ENCODE measurements at regions of chrX and their contacts with region 1.

Region 1: GRCh38 chrX:130120746-130121504 is 10.6 kb upstream of the ELF4 start:
- DNase-seq: no peak
- ATAC-seq: peak; percentile 89
- H3K4me3 ChIP-seq: peak overlapping the region; percentile 53; the same call in 1 of the 2 replicates
- H3K27ac ChIP-seq: peak overlapping the region; percentile 65
- H3K4me1 ChIP-seq: peaks cover 30% of the 10 kb centered on the region
- H3K27me3 ChIP-seq: no peaks in the 10 kb centered on the region
- CTCF ChIP-seq: peak; percentile 48 to 56 (median 53); a peak in 4 of 6 replicates
- EP300 ChIP-seq: no peak
- POLR2A ChIP-seq: peak; percentile 45; the same call in 1 of the 2 replicates
- RAD21 ChIP-seq: peak; percentile 64

Region 2: GRCh38 chrX:130060122-130061069 is 60.5 kb before region 1 on chrX:
- CTCF ChIA-PET with region 1: interaction called, 10 read pairs
- POLR2A ChIA-PET with region 1: no interaction called
- RAD21 ChIA-PET with region 1: interaction called, 6 read pairs
- SMC1A ChIA-PET with region 1: interaction called, 5 read pairs
- in situ Hi-C with region 1: no loop called
- intact Hi-C with region 1: no loop called
- DNase-seq: no peak
- ATAC-seq: peak; percentile 98
- H3K4me3 ChIP-seq: peak overlapping the region; percentile 36; the same call in 1 of the 2 replicates
- H3K27ac ChIP-seq: no peak overlapping the region
- H3K4me1 ChIP-seq: peaks cover 3% of the 10 kb centered on the region; the same call in 1 of the 2 replicates
- H3K27me3 ChIP-seq: no peaks in the 10 kb centered on the region
- CTCF ChIP-seq: peak; percentile 66 to 90 (median 76)
- EP300 ChIP-seq: no peak
- POLR2A ChIP-seq: peak; percentile 66
- RAD21 ChIP-seq: peak; percentile 79

Region 3: DNA sequence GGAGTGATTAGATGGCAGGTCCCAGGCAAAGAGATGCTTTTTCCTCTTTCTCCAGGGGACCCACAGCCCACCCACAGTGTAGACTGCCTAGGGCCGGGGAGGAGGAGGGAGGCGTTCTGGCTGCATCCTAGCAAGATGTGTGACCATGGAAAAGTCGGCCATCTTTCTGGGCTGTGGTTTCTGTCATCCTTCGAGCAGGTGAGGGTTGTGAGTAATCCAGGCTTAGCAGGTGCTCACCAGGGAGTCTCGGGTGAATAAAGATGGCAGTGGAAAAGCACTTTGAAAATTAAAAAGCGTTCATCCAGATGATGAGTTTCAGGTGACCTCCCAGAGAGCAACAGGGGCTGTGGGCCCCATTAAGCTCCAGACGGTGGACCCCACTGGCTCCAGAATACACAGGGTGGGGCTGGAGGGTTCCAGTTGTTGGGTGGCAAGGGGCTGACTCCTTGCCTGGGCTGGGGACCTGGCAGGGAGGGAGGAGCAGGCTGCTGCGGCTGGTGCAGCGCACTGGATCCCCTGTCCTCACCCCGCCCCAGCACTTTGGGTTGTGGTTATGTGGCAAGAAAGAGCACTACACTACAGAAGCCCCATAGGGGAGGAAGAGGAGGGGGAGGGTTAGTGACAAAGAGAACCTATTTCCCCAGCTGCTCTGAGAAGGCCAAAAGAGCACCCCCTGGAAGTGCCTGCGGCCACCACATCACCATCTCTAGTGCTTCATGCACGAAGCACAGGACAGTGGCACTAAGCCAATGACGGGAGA is 34.3 kb before region 1 on chrX:
- CTCF ChIA-PET with region 1: interaction called, 75 read pairs
- POLR2A ChIA-PET with region 1: interaction called, 23 read pairs
- RAD21 ChIA-PET with region 1: interaction called, 75 read pairs
- SMC1A ChIA-PET with region 1: interaction called, 68 read pairs
- in situ Hi-C with region 1: no loop called
- intact Hi-C with region 1: loop called (anchors 1 kb)
- DNase-seq: no peak
- ATAC-seq: peak; percentile 52
- H3K4me3 ChIP-seq: peak overlapping the region; percentile 70
- H3K27ac ChIP-seq: peak overlapping the region; percentile 93
- H3K4me1 ChIP-seq: peaks cover 44% of the 10 kb centered on the region
- H3K27me3 ChIP-seq: no peaks in the 10 kb centered on the region
- CTCF ChIP-seq: no peak
- EP300 ChIP-seq: no peak
- POLR2A ChIP-seq: peak; percentile 80
- RAD21 ChIP-seq: no peak

Region 4: GRCh38 chrX:130091958-130092522 is 28.9 kb before region 1 on chrX:
- CTCF ChIA-PET with region 1: interaction called, 4 read pairs
- POLR2A ChIA-PET with region 1: interaction called, 23 read pairs
- RAD21 ChIA-PET with region 1: interaction called, 13 read pairs
- SMC1A ChIA-PET with region 1: interaction called, 5 read pairs
- in situ Hi-C with region 1: no loop called
- intact Hi-C with region 1: no loop called
- DNase-seq: peak; percentile 81
- ATAC-seq: peak; percentile 97
- H3K4me3 ChIP-seq: peak overlapping the region; percentile 64; the same call in 1 of the 2 replicates
- H3K27ac ChIP-seq: peak overlapping the region; percentile 88
- H3K4me1 ChIP-seq: peaks cover 18% of the 10 kb centered on the region
- H3K27me3 ChIP-seq: no peaks in the 10 kb centered on the region
- CTCF ChIP-seq: peak; percentile 22 to 33 (median 28); a peak in 4 of 6 replicates
- EP300 ChIP-seq: no peak
- POLR2A ChIP-seq: peak; percentile 76
- RAD21 ChIP-seq: peak; percentile 36; the same call in 1 of the 2 replicates

Region 5: DNA sequence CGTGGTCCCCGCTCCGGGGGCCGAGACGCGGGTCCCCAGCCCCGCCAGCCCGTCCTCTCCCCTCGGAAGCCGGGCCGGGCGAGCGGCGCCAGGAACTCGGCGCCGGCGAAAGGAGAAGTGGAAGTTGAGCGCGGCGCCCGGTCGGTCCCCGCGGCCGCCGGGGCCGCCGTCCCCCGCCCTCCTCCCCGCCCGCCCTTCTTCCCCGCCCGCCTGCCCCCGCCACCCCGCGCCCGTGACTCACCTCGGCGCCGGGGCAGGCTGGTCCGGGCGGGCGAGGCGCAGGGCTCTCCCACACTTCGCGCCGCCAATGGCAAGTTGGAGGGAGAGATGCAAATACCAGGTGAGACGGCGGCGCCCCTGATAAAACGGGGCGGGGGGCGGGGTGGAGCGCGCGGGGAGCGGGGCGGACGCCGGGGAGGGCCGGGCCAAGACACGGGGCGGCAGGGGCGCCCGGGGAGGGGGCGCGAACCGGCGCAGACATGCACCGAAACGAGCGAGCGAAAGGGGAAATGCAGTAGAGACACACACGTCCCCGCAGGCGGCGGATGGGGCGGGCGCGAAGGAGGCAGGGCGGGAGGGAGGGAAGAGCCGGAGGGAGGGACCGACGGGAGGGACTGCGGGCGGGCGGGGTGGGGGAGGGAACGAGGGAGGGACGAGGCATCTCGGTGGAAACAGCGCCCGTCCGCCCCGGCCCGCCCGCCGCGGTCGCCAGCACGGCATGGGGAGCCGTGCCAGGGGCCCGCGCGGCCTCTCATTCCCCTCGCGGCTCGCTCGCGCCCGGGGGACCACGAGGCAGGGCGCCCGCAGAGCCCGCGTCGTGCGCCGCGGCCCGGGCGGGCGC is 10.3 kb before region 1 on chrX and contains the start of gene ELF4:
- CTCF ChIA-PET with region 1: interaction called, 4 read pairs
- POLR2A ChIA-PET with region 1: interaction called, 10 read pairs
- RAD21 ChIA-PET with region 1: interaction called, 16 read pairs
- SMC1A ChIA-PET with region 1: interaction called, 25 read pairs
- in situ Hi-C with region 1: no loop called
- intact Hi-C with region 1: no loop called
- DNase-seq: no peak
- ATAC-seq: peak; percentile 39
- H3K4me3 ChIP-seq: peak within 1 kb of the TSS; percentile 66
- H3K27ac ChIP-seq: peak within 1 kb of the TSS; percentile 78
- H3K4me1 ChIP-seq: peaks cover 15% of the 10 kb centered on the region
- H3K27me3 ChIP-seq: no peaks in the 10 kb centered on the region; a peak in 1 of 4 replicates
- CTCF ChIP-seq: no peak
- EP300 ChIP-seq: no peak
- POLR2A ChIP-seq: peak; percentile 51; the same call in 1 of the 2 replicates
- RAD21 ChIP-seq: no peak
- polyA plus RNA-seq, gene ELF4: 4.0 to 5.2 TPM

Region 6: DNA sequence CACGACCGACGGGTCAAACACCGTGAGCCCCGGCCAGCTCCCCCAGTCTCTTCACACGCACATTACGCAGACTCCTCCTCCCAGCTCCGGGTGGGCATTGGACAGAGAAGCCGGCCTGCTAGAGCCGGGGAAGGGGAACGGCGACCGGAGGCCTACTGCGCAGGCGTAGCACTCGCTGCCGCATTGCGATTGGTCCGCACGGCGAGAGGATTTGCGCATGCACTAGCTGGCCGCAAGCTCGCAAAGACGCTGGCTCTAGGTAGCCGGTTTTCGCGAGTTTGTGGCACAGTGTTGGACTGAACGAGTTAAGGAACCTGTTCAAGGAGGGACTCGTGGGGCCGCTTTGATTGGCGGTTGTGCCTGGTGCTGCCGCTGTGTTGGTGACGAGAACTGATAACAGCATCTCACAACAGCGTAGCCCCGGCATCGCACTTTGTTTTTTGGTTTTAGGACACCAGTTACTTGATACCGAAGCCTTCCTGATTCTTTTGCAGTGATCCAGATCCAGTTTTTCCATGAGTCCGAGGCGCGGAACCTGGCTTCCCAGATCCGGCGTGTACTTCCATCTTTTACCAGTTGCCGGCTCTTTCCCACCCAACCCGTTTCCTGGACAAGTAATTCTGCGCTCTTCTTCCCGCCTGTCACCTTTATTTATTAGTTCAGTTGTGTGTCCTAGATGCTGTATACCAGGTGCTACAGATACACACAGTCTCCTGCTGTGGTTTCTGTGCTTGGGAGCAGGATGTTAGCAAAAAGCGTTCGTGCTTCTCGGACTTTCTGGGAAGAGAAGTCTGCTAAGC is 45.0 kb after region 1 on chrX and contains the start of gene AIFM1:
- CTCF ChIA-PET with region 1: interaction called, 6 read pairs
- POLR2A ChIA-PET with region 1: interaction called, 6 read pairs
- RAD21 ChIA-PET with region 1: no interaction called
- SMC1A ChIA-PET with region 1: no interaction called
- in situ Hi-C with region 1: no loop called
- intact Hi-C with region 1: loop called (anchors 5 kb)
- DNase-seq: peak; percentile 91
- ATAC-seq: peak; percentile 93
- H3K4me3 ChIP-seq: peak within 1 kb of the TSS; percentile 69
- H3K27ac ChIP-seq: peak within 1 kb of the TSS; percentile 70
- H3K4me1 ChIP-seq: peaks cover 4% of the 10 kb centered on the region; the same call in 1 of the 2 replicates
- H3K27me3 ChIP-seq: no peaks in the 10 kb centered on the region
- CTCF ChIP-seq: no peak
- EP300 ChIP-seq: no peak
- POLR2A ChIP-seq: peak; percentile 84
- RAD21 ChIP-seq: no peak
- polyA plus RNA-seq, gene AIFM1: 44.2 to 78.0 TPM

Region 7: GRCh38 chrX:130260316-130260715 is 139.4 kb after region 1 on chrX:
- CTCF ChIA-PET with region 1: no interaction called
- POLR2A ChIA-PET with region 1: no interaction called
- RAD21 ChIA-PET with region 1: no interaction called
- SMC1A ChIA-PET with region 1: no interaction called
- in situ Hi-C with region 1: no loop called
- intact Hi-C with region 1: no loop called
- DNase-seq: no peak
- ATAC-seq: no peak
- H3K4me3 ChIP-seq: no peak overlapping the region
- H3K27ac ChIP-seq: no peak overlapping the region
- H3K4me1 ChIP-seq: no peaks in the 10 kb centered on the region
- H3K27me3 ChIP-seq: no peaks in the 10 kb centered on the region
- CTCF ChIP-seq: no peak
- EP300 ChIP-seq: no peak
- POLR2A ChIP-seq: no peak
- RAD21 ChIP-seq: no peak

Measured in GM12878 (cell line).